ENCODE measurements at regions of chr12 and their contacts with region 1.

Region 1: DNA sequence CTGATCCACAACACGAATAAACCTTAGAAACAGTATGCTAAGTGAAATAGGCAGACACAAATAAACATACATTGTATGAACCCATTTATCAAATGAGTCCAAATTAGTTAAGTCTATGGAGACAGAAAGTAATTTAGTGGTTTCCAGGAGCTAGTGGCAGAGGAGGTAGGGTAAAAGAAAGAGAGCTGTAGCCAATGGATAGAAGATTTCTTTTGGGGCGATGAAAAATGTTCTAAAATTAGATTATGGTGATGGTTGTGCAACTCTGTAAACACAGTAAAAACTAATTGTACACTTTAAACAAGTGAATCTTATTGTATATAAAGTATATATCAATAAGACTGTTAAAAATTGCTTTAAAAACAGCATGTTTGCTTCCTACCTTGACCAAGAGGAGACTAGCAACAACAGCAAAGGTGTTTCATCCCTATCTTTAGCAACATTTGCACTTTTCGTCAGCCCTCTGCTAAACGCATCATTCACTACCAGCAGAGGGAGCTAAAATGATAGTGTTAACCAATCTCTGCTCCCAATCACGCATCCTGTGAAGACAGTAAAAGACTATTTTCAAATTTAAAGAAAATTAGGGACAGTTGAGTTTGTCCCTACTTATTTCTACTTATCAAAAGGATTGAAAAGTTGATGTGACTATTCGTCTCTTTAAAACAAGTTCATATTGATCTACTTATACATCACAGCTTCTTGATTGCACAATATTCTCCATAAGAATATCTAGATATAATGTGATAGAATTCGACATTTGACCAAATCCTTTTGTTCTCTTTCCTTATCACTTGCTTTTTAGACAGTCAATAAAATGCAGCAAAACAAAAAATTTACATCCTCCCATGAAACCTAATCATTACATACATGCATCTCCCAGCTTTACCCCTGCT is 24.0 kb upstream of the LGR5 start:
- DNase-seq: peak in 25 of 42 donors; percentile 17 to 81 (median 49)

Region 2: GRCh38 chr12:71551529-71551928 is 135.9 kb after region 1 on chr12:
- intact Hi-C with region 1: loop called (anchors 5 kb)
- DNase-seq: peak in 5 of 42 donors; percentile 11 to 40 (median 13)

Region 3: GRCh38 chr12:71636704-71637115 is 221.1 kb after region 1 on chr12:
- intact Hi-C with region 1: loop called (anchors 10 kb)
- DNase-seq: peak in 9 of 42 donors; percentile 22 to 67 (median 35)

Region 4: DNA sequence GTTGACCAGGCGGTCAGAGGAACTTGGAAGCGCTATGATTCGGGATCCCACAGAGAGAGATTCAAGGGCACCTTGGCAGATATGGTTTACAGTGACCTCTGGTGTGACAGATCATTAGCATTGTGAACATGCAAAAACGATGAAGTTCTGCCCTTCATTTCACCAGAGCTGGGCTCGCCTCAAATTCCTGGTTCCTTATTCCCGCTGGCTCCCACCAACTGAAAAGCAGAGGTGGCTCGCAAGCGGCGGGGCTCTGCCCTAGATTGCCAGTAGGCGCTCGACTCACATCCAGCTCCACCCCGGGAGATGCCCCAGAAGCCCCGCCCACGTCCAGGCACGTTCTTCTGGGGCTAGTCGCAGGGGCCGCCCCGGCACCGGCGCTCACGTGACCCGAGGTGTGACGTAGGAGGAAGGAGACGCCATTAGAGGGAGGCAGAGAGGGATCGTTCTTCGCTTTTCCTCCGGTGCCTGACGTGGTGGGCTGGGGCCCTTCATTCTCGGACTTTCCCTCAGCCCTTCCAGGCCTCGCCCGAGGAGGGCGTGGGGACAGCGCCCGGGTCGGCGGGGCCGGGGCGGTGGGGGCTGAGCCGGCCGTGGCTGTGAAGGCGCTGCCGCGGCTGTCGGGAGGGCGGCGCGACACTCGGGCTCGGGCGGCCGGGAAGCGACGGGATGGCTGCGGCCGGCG is 339.0 kb after region 1 on chr12 and contains the start of gene RAB21:
- intact Hi-C with region 1: loop called (anchors 10 kb)
- DNase-seq: peak; percentile 95 to 100 (median 99)

Measured in head of caudate nucleus (tissue), 42 donors.